Activated CD4-positive, alpha-beta T cell treated with anti-CD3 and anti-CD28 coated beads, Interleukin-2, amount 10 ng/mL, durations not matched to agents 24 days and 14 days (primary cell): ENCODE measurements at regions of chr2 and their contacts with region 1.

Region 1: DNA sequence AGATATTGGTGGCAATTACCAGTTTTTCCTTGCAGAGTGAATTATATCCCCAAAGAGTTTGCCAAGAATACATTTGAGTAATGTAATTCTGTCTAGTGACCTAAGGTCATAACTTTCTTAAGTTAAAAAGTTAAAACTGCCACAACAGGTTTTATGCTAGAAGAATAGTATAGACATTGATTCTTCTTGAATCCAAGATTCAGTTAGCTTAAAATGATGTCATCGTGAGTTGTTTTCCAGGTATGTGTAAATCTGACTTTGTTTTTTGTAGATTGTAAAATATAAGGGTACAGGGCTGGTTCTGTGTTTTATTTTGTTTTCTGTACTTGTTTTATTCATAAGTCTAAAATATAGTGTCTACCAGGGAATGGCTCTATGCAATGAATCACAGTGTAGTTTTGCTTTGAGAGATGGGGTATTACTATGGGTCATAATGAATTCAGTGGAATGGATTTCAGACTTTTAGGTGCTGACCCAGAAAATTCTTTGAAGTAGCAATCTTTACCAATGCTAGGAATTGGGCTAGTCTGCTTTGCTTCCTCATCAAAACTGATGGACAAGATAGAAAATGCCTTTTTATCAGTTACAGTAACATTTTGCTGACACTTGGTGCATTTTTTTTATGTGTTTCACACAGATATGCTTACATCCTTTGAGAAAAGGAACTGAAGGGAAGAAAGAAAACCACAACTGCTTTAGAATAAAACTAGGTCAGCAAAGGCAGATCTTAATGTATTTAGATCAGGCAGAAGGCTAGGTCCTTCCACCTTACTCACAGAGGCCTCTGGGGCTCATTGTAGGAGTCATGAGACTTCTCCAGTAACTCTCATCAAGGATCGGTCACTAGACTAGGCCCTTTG is 20.8 kb upstream of the MGAT5 start:
- DNase-seq: peak; percentile 75
- H3K4me3 Mint-ChIP-seq: peak overlapping the region; percentile 67
- H3K27ac Mint-ChIP-seq: peak overlapping the region; percentile 84
- H3K4me1 Mint-ChIP-seq: peaks cover 58% of the 10 kb centered on the region
- H3K27me3 Mint-ChIP-seq: no peaks in the 10 kb centered on the region

Region 2: DNA sequence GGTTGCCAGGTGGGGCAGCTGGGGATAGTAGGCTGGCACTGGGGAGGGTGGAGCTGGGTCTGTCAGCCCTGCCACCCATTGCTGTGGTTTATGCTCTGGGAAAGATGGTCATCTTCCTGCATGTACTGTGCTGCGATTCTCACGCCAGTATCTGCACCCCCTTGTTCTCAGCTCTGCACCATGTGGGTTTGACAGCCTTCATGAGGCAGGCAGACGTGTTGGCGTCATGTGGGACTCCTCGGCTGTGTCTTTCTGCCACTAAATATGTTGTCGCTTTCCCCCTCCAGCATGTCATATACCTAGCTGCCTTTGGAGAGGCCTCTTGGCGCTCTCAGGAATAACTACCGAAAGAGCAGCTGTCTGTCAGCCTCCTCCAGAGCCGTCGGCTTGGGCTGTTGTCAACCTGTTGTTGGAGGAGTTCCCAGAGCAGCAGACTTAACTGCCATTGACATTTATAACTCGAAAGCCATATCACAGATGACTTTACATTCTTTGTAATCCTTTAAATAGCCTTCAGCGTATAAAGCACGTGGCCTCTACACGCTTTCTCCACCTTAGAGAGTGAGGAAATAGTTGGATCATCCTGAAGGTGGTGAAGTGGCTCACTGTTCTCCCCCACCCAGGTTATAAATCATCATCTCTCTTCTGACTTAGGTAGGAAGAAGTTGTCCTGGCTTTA is 59.6 kb before region 1 on chr2:
- intact Hi-C with region 1: loop called (anchors 1 kb)
- DNase-seq: no peak
- H3K4me3 Mint-ChIP-seq: no peak overlapping the region
- H3K27ac Mint-ChIP-seq: no peak overlapping the region
- H3K4me1 Mint-ChIP-seq: peaks cover 15% of the 10 kb centered on the region
- H3K27me3 Mint-ChIP-seq: no peaks in the 10 kb centered on the region

Region 3: DNA sequence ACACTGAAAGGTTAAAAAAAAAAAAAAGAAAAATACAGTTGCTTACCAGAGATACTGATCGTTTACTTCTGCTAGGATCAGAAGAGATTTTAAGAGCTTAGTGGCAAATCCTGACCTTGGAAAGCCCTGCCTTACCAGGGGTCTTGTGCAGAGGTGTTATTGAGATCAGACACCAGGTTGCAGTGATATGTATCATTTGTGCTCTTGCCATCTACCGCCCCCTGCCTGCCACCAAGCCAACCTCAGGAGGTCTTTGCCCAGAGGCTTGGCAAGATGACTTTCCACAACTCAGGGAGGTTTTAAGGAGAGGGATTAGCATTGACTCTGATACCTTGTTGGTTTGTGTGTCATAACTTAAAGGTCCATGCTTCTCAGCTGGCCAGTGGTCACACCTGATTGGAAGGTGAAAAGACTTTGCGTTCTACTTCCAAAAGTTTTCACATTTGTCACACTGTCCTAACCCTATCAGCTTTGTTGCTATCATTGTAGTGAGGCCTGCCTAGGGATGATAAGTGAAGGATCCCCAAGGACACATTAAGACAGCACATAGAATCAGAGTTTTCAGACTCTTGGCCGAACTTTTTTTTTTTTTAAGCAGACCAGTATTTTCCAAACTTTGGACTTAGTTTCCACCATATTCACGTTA is 25.4 kb before region 1 on chr2:
- intact Hi-C with region 1: no loop called
- DNase-seq: peak; percentile 84
- H3K4me3 Mint-ChIP-seq: no peak overlapping the region
- H3K27ac Mint-ChIP-seq: no peak overlapping the region
- H3K4me1 Mint-ChIP-seq: peaks cover 10% of the 10 kb centered on the region
- H3K27me3 Mint-ChIP-seq: no peaks in the 10 kb centered on the region

Region 4: GRCh38 chr2:134250840-134251461 is 17.9 kb after region 1 on chr2:
- intact Hi-C with region 1: loop called (anchors 1 kb)
- DNase-seq: no peak
- H3K4me3 Mint-ChIP-seq: no peak overlapping the region
- H3K27ac Mint-ChIP-seq: peak overlapping the region; percentile 8
- H3K4me1 Mint-ChIP-seq: peaks cover 72% of the 10 kb centered on the region
- H3K27me3 Mint-ChIP-seq: peaks cover 10% of the 10 kb centered on the region

Region 5: DNA sequence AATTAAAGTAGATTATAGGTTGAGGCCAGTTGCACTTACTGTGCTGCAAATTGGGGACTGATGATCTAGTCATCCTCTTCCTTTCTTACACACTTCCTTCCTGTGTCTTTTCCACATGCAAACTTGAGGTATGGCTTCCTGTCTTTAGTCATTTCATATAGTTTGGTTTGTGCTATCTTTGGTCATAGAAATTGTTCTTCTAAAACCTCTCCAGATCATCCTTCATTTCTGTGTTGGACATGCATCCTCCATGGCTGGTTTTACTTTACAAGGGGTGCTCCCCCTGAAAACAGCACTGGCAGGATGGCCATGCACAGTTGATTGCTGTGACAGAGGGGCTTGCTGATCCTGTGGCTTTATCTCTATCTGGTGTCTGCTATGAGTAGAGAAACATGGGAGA is 57.3 kb after region 1 on chr2:
- intact Hi-C with region 1: loop called (anchors 1 kb)
- DNase-seq: peak; percentile 77
- H3K4me3 Mint-ChIP-seq: no peak overlapping the region
- H3K27ac Mint-ChIP-seq: no peak overlapping the region
- H3K4me1 Mint-ChIP-seq: peaks cover 30% of the 10 kb centered on the region
- H3K27me3 Mint-ChIP-seq: no peaks in the 10 kb centered on the region

Region 6: GRCh38 chr2:134411828-134412638 is 178.9 kb after region 1 on chr2:
- intact Hi-C with region 1: loop called (anchors 5 kb)
- DNase-seq: peak; percentile 92
- H3K4me3 Mint-ChIP-seq: no peak overlapping the region
- H3K27ac Mint-ChIP-seq: no peak overlapping the region
- H3K4me1 Mint-ChIP-seq: peaks cover 19% of the 10 kb centered on the region
- H3K27me3 Mint-ChIP-seq: no peaks in the 10 kb centered on the region

Region 7: DNA sequence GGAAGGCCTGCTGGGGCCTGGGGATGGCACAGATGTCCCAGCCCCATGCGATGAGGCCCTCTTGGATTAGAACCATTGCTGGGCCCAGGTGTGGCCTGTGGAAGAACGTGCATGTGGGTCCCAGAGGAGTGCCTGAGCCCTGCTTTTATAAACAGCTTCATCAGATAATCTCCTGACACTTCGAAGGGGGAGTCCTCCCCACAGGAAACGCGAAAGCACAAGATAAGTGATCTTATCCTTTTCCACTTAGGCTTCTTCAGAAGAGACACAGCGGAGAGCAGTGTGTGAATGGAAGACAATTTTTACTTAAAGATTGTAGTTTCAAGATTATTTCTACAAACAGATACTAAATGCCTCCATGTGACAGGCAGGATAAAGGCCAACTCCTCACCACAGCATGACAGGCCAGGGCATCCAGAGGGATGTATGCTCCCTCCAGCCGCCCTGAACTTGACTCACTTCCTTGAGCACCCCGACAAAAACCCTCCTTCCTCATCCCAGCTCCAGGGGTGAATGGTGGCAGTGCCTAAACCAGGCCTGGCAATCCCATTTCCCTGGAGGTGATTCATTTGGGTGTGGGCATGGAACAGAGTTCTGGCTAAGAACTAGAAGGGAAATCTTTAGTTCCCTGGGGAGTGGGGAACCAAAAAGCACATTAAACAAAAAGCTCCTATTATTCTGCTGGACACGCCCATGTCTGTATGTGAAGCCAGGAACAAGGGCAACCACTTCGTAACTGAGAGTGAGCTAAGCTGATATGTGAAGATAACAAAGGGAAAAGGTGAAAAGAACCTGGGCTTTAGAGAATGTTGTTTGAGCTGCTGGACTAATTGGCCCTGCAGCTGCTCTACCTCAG is 541.9 kb after region 1 on chr2:
- intact Hi-C with region 1: no loop called
- DNase-seq: no peak
- H3K4me3 Mint-ChIP-seq: no peak overlapping the region
- H3K27ac Mint-ChIP-seq: no peak overlapping the region
- H3K4me1 Mint-ChIP-seq: peaks cover 5% of the 10 kb centered on the region
- H3K27me3 Mint-ChIP-seq: peaks cover 10% of the 10 kb centered on the region